ENCODE measurements at regions of chr9 and their contacts with region 1.

Region 1: DNA sequence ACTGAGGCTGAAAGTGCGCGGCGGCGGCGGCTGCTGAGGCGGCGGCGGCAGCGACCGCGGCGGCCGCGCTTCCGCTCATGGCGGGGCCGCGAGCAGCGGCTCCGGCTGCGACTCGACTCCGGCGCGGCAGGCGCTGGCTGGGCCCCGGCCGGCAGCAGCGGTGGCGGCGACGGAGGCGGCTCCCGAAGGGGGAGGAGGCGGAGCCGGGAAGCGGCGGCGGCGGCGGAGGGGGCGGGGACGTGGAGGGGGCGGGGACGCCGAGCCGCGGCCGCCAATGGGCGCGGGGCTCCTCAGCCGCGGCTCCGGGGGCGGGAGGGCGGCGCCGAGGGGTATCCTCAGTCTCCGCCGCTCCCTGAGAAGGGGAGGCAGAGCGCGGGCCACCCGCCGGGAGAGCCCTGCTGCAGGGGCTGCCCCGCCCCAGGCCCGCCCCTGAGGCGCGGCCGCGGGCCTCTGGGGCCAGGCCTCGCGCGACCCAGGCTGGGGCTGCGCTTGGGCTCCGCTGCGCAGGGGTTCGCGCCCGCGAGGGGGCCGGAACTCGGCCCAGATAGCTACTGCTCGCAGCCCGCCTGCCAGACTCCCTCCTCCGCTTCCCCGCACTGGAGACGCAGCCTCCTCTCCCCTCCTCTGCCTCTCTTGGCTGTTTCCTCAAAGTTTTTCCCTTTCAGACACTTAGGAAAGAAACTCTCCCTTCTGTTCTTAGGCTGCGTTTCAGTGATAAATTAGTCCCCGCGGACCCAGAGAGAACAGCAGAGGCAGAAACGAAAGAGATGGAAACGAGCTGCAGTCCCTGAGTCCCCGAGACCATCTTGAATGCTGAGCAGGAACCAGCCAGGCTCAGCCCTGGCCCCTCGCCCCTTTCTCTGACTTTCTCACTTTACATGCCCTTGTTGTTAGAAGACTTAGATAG is 85.0 kb upstream of the MELK start:
- DNase-seq: peak; percentile 97
- H3K4me3 ChIP-seq: peak overlapping the region; percentile 97
- H3K27ac ChIP-seq: peak overlapping the region; percentile 86
- H3K4me1 ChIP-seq: peaks cover 7% of the 10 kb centered on the region
- H3K27me3 ChIP-seq: no peaks in the 10 kb centered on the region
- CTCF ChIP-seq: no peak

Region 2: GRCh38 chr9:36346569-36346968 is 141.2 kb before region 1 on chr9:
- CTCF ChIA-PET with region 1: no interaction called
- POLR2A ChIA-PET with region 1: no interaction called
- intact Hi-C with region 1: no loop called
- DNase-seq: no peak
- H3K4me3 ChIP-seq: no peak overlapping the region
- H3K27ac ChIP-seq: no peak overlapping the region
- H3K4me1 ChIP-seq: no peaks in the 10 kb centered on the region
- H3K27me3 ChIP-seq: no peaks in the 10 kb centered on the region
- CTCF ChIP-seq: no peak

Region 3: GRCh38 chr9:36470643-36471290 is 17.0 kb before region 1 on chr9:
- CTCF ChIA-PET with region 1: no interaction called
- POLR2A ChIA-PET with region 1: interaction called, 18 read pairs
- intact Hi-C with region 1: no loop called
- DNase-seq: no peak
- H3K4me3 ChIP-seq: no peak overlapping the region
- H3K27ac ChIP-seq: no peak overlapping the region
- H3K4me1 ChIP-seq: no peaks in the 10 kb centered on the region
- H3K27me3 ChIP-seq: no peaks in the 10 kb centered on the region
- CTCF ChIP-seq: no peak

Region 4: DNA sequence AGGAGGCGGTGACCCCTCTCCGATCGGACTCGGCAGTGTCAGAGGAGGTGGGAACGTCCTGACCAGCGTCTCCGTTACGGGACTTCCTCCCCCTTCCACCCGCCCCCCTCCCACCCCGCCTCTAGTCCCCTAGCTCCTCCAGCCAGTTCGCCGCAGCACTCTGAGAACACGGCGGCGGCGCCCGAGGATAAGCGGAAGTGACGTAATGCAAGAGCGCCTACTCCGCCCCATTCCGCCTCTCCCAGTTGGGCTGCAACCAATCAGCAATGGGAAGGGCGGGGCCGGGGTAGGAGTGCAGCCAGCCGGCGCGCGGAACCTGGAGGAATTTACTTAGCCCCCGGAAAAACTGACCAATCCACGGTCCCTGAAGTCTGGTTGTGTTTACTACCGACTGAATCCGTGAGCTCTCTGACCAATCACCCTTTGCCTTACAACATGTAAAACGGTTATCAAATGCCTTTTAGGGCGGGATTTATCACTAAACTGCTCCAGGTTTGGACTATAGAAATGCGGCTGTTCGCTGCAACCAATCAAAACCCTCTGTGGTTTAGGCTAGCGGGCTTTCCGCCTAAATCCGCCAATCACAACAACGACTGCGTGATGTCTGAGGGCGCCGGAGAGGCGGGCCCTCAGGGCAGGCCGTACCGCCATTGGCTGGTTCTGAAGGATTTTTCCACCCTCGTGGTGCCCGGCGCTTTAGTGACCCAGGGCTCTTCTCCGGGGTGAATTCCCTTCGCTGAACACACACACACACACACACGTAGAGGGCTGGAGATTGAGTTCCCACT is 977.7 kb after region 1 on chr9 and contains the start of gene ZBTB5:
- CTCF ChIA-PET with region 1: no interaction called
- POLR2A ChIA-PET with region 1: no interaction called
- intact Hi-C with region 1: no loop called
- DNase-seq: peak; percentile 99
- H3K4me3 ChIP-seq: peak within 1 kb of the TSS; percentile 98
- H3K27ac ChIP-seq: peak within 1 kb of the TSS; percentile 93
- H3K4me1 ChIP-seq: peaks cover 24% of the 10 kb centered on the region
- H3K27me3 ChIP-seq: no peaks in the 10 kb centered on the region
- CTCF ChIP-seq: no peak
- total RNA-seq, gene ZBTB5: 17.2 and 18.0 TPM in 2 replicates

Measured in A673 (cell line).